ENCODE measurements at regions of chr17 and their contacts with region 1.

Region 1: DNA sequence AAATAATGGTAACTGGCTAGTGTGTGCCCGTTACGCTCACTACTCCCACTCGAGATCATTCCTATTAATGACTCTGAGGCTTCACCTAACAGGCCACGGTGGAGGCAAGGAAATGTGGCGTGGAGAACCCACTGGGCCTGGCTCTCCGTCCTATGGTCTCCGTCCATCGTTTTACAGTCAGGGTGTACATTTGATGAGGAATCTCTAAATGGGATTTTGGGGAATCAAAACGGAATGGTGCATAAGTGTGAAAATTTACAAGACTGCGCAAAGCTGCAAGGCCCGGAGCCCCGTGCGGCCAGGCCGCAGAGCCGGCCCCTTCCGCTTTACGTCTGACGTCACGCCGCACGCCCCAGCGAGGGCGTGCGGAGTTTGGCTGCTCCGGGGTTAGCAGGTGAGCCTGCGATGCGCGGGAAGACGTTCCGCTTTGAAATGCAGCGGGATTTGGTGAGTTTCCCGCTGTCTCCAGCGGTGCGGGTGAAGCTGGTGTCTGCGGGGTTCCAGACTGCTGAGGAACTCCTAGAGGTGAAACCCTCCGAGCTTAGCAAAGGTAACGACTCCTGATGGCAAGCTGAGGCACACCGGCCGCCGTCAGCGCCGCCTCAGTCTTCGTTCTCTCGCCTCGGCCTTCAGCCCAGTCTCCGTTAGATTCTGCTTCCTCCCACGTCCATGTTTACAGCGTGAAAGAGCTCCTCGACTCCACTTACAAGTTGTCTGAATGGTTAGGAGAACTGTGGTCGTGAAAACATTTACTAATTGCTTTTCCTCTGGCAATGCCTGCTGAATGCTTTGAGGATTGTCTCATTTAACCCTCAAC is at the start of gene RAD51C:
- DNase-seq: peak; percentile 94
- ATAC-seq: peak; percentile 96
- H3K4me3 Mint-ChIP-seq: peak within 1 kb of the TSS; percentile 92
- H3K27ac Mint-ChIP-seq: peak within 1 kb of the TSS; percentile 98
- H3K4me1 Mint-ChIP-seq: peaks cover 27% of the 10 kb centered on the region
- H3K27me3 Mint-ChIP-seq: no peaks in the 10 kb centered on the region
- total RNA-seq, gene RAD51C: 85.4 to 87.2 TPM

Region 2: DNA sequence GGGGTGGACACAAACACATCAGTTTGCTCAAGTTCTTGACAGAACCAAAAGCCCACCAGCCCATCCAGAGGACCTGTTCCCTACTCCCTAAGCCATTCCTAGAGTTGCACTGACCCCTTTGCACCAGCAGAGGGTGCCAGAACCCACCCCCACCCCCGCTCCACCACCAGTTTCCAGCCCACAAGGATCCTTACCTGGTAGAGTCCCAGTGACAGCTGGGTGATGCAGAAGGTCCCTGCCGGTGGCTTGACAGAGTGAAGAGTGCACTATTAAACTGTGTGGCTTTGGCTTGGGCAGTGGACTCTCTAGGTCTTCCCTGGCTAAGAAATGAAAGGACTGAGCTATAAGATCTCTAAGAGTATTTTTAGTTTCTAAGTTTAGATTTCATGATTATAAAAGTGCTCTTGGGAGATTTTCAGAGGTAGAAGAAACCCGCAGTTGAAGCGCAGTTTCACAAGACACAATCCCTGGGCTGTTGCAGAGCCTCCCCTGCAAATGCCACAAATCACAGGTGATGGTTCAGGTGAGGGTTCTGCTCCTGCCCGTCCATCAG is 104.7 kb before region 1 on chr17:
- CTCF ChIA-PET with region 1: no interaction called
- POLR2A ChIA-PET with region 1: no interaction called
- intact Hi-C with region 1: loop called in 1 of 2 experiments (anchors 5 kb)
- DNase-seq: peak; percentile 79
- ATAC-seq: peak; percentile 97
- H3K4me3 Mint-ChIP-seq: no peak overlapping the region
- H3K27ac Mint-ChIP-seq: no peak overlapping the region
- H3K4me1 Mint-ChIP-seq: no peaks in the 10 kb centered on the region
- H3K27me3 Mint-ChIP-seq: no peaks in the 10 kb centered on the region

Region 3: GRCh38 chr17:58722696-58723095 is 30.2 kb after region 1 on chr17:
- CTCF ChIA-PET with region 1: no interaction called
- POLR2A ChIA-PET with region 1: no interaction called
- intact Hi-C with region 1: no loop called
- DNase-seq: no peak
- ATAC-seq: no peak
- H3K4me3 Mint-ChIP-seq: no peak overlapping the region
- H3K27ac Mint-ChIP-seq: no peak overlapping the region
- H3K4me1 Mint-ChIP-seq: no peaks in the 10 kb centered on the region
- H3K27me3 Mint-ChIP-seq: no peaks in the 10 kb centered on the region